ENCODE measurements at regions of chr9 and their contacts with region 1.

Region 1: GRCh38 chr9:6805532-6805931 is 47.8 kb downstream of the KDM4C start:
- DNase-seq: no peak
- CTCF ChIP-seq: no peak

Region 2: DNA sequence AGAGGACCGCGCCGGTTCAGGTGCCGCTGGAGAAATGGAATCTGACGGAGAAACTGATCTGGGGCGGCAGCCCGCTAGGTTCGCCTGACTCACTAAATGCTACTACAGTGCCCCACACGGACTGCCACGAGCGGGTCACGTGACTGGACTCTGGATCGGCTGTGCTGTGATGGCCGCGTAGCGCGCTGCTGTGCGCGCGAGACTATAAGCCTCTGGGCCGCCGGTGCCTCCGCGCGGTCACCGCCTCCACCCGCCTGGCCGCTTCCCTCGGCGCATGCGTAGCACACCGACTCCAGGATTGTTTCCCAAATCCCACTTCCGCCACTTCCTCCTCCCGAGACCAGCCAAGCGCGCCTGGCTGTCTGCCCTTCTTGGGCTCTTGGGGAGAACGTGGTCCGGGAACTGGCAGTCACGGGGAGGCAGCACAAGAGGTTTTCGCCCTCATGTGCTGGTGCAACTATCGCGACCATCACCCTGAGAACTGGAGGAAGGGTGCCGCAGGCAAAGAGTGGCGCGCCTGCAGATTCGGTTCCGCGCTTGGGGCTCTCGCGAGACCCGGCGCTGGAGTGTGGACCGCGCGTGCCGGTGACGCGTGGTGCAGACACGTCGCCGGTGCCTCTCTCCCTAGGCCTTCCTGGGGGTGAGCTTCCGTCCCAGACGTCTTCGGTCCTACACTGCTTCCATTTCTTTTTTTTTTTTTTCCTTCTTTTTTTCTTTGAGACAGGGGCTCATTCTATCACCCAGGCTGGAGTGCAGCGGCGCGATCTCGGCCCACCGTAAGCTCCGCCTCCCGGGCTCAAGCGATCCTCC is 124.2 kb before region 1 on chr9:
- CTCF ChIA-PET with region 1: no interaction called
- POLR2A ChIA-PET with region 1: no interaction called
- DNase-seq: peak; percentile 94
- CTCF ChIP-seq: no peak

Region 3: DNA sequence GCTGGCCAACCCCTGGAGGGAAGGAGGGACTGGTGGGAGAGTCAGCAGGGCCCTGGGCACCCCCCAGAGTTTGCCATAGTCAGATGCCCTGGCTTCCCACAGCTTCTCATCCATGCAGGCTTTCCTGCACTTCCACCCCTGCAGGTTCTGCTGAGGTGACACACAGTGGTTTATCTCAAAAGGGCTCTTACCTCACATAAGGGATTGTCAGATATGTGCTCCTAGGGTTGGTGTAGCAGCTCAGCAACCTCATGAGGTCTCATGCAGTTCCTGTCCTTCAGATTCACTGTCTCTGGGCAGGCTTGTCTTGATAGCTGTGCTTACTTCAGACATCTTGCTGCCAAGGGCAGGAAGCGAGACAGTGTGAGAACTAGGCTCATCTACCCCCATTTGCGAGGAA is 95.6 kb after region 1 on chr9:
- CTCF ChIA-PET with region 1: no interaction called
- POLR2A ChIA-PET with region 1: interaction called, 12 read pairs
- DNase-seq: no peak
- CTCF ChIP-seq: no peak

Measured in GM10248 (cell line).